Psoas muscle (tissue), 8 donors: ENCODE measurements at regions of chr20 and their contacts with region 1.

Region 1: DNA sequence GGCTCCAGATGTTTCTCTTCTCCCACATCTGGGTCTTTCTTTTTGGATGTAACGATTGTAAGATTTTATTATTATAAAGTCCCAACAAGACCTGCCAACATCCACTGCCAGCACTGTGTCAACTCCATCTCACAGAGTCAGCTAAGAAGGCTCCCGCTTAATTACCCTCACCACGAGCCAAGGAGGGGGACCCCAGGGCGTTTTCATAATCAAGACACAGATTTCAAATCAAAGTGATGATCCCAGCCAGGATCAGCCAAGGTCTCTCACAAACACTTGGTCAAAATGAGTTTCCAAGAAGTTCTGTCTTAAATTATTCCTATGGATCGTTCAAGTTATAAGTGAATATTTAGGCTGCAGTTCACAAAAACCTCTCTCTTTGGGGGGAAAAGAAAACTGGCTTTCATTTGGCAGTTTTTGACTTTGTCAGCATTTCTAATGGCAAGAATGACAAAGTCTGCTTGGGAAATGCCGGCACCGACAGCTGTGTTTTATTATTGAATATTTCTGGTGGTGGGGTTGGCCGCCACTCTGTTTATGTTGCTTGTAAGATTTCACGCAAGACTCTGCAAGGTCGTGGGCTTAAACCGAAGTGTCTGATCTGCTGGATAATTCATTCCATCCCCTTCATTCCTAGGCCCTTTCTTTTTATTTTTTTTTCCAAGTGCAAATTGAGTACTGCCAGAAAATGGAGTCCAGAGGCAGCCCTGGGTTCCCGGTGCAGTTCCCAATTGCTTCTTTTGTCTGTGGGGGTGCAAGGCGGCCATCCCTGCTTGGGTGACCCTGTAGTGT is 170.2 kb upstream of the PMEPA1 start:
- DNase-seq: no peak
- ATAC-seq: no peak
- H3K4me3 ChIP-seq: no peak overlapping the region
- H3K27ac ChIP-seq: no peak overlapping the region
- H3K4me1 ChIP-seq: no peaks in the 10 kb centered on the region
- H3K27me3 ChIP-seq: peaks cover 0 to 5% (median 0%) of the 10 kb centered on the region in 3 donors
- CTCF ChIP-seq: no peak

Region 2: GRCh38 chr20:57834306-57835170 is 45.4 kb before region 1 on chr20:
- intact Hi-C with region 1: loop called in 1 of 2 experiments (anchors 5 kb)
- DNase-seq: no peak
- ATAC-seq: no peak
- H3K4me3 ChIP-seq: no peak overlapping the region
- H3K27ac ChIP-seq: no peak overlapping the region
- H3K4me1 ChIP-seq: peaks cover 4% of the 10 kb centered on the region
- H3K27me3 ChIP-seq: no peaks in the 10 kb centered on the region
- CTCF ChIP-seq: no peak